CD4-positive, alpha-beta memory T cell (primary cell): ENCODE measurements at regions of chr11 and their contacts with region 1.

Region 1: DNA sequence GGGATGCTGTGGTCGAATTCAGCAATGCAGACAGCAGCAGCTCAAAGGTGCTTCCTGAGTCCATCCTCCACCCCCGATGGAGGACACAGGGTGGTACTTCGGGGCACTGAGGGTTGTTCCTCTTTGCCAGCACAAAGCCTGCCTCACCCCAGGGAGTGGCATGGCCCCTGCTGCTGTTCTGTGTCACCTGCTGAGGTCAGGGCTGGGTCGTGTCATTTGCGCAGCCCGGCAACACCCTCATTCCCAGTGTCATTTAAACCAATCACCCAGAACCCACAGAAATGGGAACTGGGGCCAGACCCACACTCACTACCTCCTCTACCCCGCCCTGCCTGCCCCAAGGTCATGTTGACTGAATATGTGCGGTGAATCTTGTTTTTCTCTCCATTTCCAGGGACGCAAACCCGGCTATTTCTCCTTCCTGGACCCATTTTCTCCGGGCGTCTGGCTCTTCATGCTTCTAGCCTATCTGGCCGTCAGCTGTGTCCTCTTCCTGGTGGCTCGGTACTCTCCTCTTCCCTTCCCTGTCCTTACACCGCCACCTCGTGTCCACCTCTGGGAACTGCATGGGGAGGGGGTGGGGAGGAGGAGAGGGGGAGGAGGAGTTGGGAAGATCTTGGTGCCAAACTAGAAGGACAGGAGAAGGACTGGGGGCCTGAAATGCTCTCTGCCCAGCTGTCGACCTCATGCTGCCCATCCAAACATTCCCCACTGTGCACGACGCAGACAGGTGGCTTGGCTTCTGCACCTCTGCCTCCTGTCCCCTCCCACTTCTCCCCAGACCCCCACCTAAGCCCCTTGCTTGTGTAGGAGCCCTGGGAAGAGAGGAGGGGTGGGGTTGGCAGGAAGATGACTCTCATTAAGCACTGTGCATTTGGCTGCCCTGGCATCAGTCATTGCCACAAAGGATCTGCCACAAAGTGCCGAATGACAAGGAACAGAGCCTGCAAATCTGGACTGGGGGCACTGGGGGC is 71.2 kb upstream of the TBCEL start:
- DNase-seq: peak; percentile 31 to 46 (median 33)
- H3K4me3 ChIP-seq: no peak overlapping the region
- H3K4me3 Mint-ChIP-seq: peak overlapping the region; percentile 63 to 81 (median 76)
- H3K27ac ChIP-seq: no peak overlapping the region
- H3K27ac Mint-ChIP-seq: peak overlapping the region in 3 of 7 donors; percentile 47 to 82 (median 79)
- H3K4me1 ChIP-seq: peaks cover 13% of the 10 kb centered on the region
- H3K4me1 Mint-ChIP-seq: peaks cover 10 to 21% (median 12%) of the 10 kb centered on the region in 4 donors
- H3K27me3 ChIP-seq: peaks cover 5% of the 10 kb centered on the region
- H3K27me3 Mint-ChIP-seq: peaks cover 9 to 14% of the 10 kb centered on the region in 2 donors

Region 2: GRCh38 chr11:120335908-120336640 is 616.7 kb before region 1 on chr11 and contains the start of gene ARHGEF12:
- CTCF ChIA-PET with region 1: no interaction called
- POLR2A ChIA-PET with region 1: no interaction called
- intact Hi-C with region 1: loop called (anchors 2 kb)
- DNase-seq: peak; percentile 48 to 69 (median 62)
- H3K4me3 ChIP-seq: peak within 1 kb of the TSS; percentile 44 to 54
- H3K4me3 Mint-ChIP-seq: peak within 1 kb of the TSS; percentile 87 to 92 (median 90)
- H3K27ac ChIP-seq: no peak within 1 kb of the TSS
- H3K27ac Mint-ChIP-seq: peak within 1 kb of the TSS in 6 of 7 donors; percentile 23 to 86 (median 76)
- H3K4me1 ChIP-seq: peaks cover 33% of the 10 kb centered on the region
- H3K4me1 Mint-ChIP-seq: peaks cover 22 to 39% (median 30%) of the 10 kb centered on the region in 4 donors
- H3K27me3 ChIP-seq: peaks cover 13% of the 10 kb centered on the region
- H3K27me3 Mint-ChIP-seq: peaks cover 33 to 39% of the 10 kb centered on the region in 2 donors
- total RNA-seq, gene ARHGEF12: 4.6 to 5.0 TPM

Region 3: DNA sequence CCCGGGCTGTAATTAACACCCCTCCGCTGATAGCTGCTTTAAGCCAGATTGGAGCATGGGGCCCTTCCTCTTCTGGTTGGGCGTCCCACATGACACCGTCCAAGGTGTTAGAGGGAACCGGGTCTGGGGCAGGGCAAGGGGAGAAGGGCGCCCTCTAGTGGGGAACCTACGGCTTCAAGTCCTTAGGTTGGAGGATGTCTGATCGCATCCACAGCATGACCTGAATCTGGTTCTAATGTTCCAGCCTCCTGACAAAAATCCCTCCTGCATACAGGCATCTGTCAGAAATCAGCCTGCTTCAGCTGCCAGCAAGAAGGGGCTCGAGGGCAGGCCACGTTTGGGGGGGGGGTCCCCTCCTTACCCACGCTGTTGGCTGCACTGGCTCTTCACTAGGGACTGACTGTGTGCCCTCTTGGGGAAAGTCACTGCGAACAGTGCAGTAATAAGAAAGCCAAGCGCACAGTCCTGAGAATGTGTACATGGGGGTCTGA is 23.0 kb before region 1 on chr11:
- CTCF ChIA-PET with region 1: interaction called, 5 read pairs
- POLR2A ChIA-PET with region 1: no interaction called
- intact Hi-C with region 1: loop called (anchors 1 kb)
- DNase-seq: peak in 2 of 5 donors; percentile 11 to 28
- H3K4me3 ChIP-seq: no peak overlapping the region
- H3K4me3 Mint-ChIP-seq: no peak overlapping the region
- H3K27ac ChIP-seq: no peak overlapping the region
- H3K27ac Mint-ChIP-seq: no peak overlapping the region
- H3K4me1 ChIP-seq: no peaks in the 10 kb centered on the region
- H3K4me1 Mint-ChIP-seq: no peaks in the 10 kb centered on the region
- H3K27me3 ChIP-seq: no peaks in the 10 kb centered on the region
- H3K27me3 Mint-ChIP-seq: peaks cover 3 to 7% of the 10 kb centered on the region in 2 donors

Region 4: GRCh38 chr11:121012091-121012490 is 59.3 kb after region 1 on chr11:
- CTCF ChIA-PET with region 1: no interaction called
- POLR2A ChIA-PET with region 1: no interaction called
- intact Hi-C with region 1: no loop called
- DNase-seq: no peak
- H3K4me3 ChIP-seq: no peak overlapping the region
- H3K4me3 Mint-ChIP-seq: no peak overlapping the region
- H3K27ac ChIP-seq: no peak overlapping the region
- H3K27ac Mint-ChIP-seq: no peak overlapping the region
- H3K4me1 ChIP-seq: no peaks in the 10 kb centered on the region
- H3K4me1 Mint-ChIP-seq: no peaks in the 10 kb centered on the region
- H3K27me3 ChIP-seq: peaks cover 3% of the 10 kb centered on the region
- H3K27me3 Mint-ChIP-seq: peaks cover 10 to 26% of the 10 kb centered on the region in 2 donors

Region 5: GRCh38 chr11:121048464-121049233 is 95.9 kb after region 1 on chr11:
- CTCF ChIA-PET with region 1: no interaction called
- POLR2A ChIA-PET with region 1: no interaction called
- intact Hi-C with region 1: no loop called
- DNase-seq: no peak
- H3K4me3 ChIP-seq: no peak overlapping the region
- H3K4me3 Mint-ChIP-seq: no peak overlapping the region
- H3K27ac ChIP-seq: no peak overlapping the region
- H3K27ac Mint-ChIP-seq: peak overlapping the region in 1 of 7 donors; percentile 38
- H3K4me1 ChIP-seq: no peaks in the 10 kb centered on the region
- H3K4me1 Mint-ChIP-seq: peaks cover 0 to 1% (median 0%) of the 10 kb centered on the region in 4 donors
- H3K27me3 ChIP-seq: no peaks in the 10 kb centered on the region
- H3K27me3 Mint-ChIP-seq: no peaks in the 10 kb centered on the region